Activated naive CD4-positive, alpha-beta T cell treated with anti-CD3 and anti-CD28 coated beads for 36 hours (primary cell): ENCODE measurements at regions of chr10 and their contacts with region 1.

Region 1: DNA sequence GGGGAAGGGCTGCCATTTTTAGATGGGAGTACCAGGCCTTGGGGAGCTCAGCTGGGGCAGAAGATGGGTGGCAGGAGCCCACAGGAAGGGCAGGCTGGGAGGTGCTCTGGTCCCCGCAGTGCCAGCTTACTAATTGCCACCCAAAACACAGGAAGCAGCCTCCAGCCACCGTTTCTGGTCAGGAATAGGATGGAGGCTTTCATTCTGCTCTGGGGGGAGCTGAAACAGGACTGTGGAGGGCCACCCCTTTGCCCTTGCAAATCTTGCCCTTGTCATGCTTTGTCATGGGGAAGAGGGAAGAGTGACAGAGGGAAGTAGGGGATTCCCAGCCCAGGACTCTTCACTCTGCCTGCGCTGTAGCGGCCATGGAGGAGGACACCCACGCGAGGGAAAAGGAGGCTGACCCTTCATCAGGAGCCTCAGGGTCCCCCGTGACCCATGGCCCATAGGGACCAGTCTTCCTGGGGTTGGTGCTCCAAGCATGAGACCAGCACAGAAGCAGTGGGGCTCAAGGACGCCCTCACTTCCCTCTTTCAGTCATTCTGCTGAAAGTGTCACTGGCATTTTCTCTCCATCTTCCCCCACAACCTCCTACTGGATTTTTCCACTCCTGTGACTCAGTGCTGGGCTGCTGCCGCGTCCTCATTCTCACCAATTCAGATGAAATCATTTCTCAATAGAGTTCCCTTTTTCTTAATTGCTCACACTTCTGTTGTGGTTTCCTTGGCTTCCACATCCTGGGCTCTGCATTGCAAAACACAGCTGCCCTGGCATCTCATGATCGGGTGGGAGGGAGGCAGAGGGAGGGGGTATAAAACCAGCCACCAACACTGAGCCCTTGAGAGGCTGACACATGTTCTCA is 61.9 kb downstream of the MKI67 start:
- DNase-seq: peak; percentile 89
- H3K4me3 Mint-ChIP-seq: peak overlapping the region; percentile 26
- H3K27ac Mint-ChIP-seq: peak overlapping the region; percentile 93
- H3K4me1 Mint-ChIP-seq: peaks cover 58% of the 10 kb centered on the region
- H3K27me3 Mint-ChIP-seq: no peaks in the 10 kb centered on the region

Region 2: DNA sequence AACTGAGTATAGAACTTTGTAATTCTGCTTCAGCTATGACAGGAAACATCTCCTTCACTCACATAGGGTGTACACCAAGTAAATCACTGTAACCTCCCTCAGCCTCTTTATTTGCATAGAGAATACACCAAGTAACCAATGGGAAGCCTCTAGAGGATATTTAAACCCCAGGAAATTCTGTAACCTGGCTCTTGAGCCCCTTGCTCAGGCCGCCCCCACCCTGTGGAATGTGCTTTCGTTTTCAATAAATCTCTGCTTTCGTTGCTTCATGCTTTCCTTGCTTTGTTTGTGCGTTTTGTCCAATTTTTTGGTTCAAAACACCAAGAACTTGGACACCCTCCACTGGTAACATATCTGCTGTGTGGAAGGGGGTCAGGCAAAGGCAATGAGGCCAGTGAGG is 231.8 kb before region 1 on chr10:
- CTCF ChIA-PET with region 1: no interaction called
- intact Hi-C with region 1: no loop called
- DNase-seq: no peak
- H3K4me3 Mint-ChIP-seq: no peak overlapping the region
- H3K27ac Mint-ChIP-seq: no peak overlapping the region
- H3K4me1 Mint-ChIP-seq: no peaks in the 10 kb centered on the region
- H3K27me3 Mint-ChIP-seq: peaks cover 10% of the 10 kb centered on the region

Region 3: GRCh38 chr10:127945335-127945734 is 119.0 kb before region 1 on chr10:
- CTCF ChIA-PET with region 1: no interaction called
- intact Hi-C with region 1: loop called (anchors 1 kb)
- DNase-seq: peak; percentile 66
- H3K4me3 Mint-ChIP-seq: no peak overlapping the region
- H3K27ac Mint-ChIP-seq: peak overlapping the region; percentile 44
- H3K4me1 Mint-ChIP-seq: peaks cover 23% of the 10 kb centered on the region
- H3K27me3 Mint-ChIP-seq: no peaks in the 10 kb centered on the region

Region 4: DNA sequence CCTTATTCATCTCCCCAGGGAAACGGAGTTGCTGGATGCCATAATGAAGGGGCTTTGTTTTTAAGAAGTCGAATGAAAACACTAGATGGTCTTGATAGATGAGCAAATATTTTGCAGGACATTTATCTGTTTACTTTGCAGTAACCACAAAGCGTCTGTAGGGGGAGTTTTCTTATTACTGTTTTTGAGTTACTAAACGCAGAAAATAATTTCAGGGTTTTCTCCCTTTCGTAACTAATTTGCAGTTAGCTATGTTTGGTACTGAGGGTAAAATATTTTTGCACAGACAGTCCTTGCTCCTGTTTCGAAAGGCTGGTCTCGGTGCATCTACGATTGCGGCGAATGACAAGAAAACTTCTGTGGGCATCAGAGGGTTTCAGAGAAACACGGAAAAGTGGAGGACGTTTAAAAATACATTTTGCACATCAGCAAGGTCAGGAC is 567.5 kb after region 1 on chr10:
- CTCF ChIA-PET with region 1: no interaction called
- intact Hi-C with region 1: no loop called
- DNase-seq: no peak
- H3K4me3 Mint-ChIP-seq: no peak overlapping the region
- H3K27ac Mint-ChIP-seq: no peak overlapping the region
- H3K4me1 Mint-ChIP-seq: peaks cover 2% of the 10 kb centered on the region
- H3K27me3 Mint-ChIP-seq: peaks cover 15% of the 10 kb centered on the region